Heart left ventricle (tissue), 16 donors: ENCODE measurements at regions of chr18 and their contacts with region 1.

Region 1: DNA sequence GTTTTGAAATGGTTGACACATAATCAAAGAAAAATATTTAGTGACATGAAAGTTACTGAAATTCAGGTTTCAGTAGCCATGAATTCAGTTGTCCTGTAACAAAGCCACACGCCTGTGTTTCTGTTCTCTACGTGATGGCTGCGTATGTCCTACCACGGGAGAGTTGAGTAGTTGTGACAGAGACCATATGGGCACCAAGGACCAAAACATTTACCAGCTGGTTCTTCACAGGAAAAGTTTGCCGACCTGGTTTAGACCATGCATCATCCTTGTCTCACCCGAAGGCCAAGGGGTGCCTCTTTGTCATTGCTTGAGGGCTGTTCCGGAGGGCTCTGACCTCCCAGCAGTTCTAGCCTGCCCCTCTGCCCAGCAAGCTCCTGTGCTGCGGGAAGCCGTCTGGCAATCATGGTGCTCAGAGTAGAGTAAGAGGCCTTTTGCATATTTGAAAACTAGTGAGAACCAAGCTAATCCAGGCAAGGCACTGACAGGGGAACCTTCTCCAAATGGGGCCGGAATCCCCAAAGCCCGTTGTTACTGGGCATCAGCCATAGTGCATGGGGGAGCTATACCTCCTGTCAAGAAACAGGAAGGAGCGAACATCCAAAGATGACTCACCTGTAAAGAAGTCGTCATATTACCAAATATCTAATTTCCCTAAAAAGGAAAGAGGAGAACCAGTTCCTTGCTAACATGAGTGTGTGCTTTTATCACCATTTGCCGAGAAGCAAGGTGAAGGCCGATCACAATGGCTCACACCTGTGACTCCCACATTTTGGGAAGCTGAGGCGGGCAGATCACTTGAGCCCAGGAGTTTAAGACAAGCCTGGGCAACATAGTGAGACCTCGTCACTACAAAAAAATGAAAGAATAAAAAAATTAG is 92.6 kb upstream of the RAB12 start:
- DNase-seq: no peak
- ATAC-seq: no peak
- H3K4me3 ChIP-seq: no peak overlapping the region
- H3K27ac ChIP-seq: no peak overlapping the region
- H3K4me1 ChIP-seq: no peaks in the 10 kb centered on the region
- H3K27me3 ChIP-seq: no peaks in the 10 kb centered on the region
- CTCF ChIP-seq: no peak
- POLR2A ChIP-seq: no peak

Region 2: DNA sequence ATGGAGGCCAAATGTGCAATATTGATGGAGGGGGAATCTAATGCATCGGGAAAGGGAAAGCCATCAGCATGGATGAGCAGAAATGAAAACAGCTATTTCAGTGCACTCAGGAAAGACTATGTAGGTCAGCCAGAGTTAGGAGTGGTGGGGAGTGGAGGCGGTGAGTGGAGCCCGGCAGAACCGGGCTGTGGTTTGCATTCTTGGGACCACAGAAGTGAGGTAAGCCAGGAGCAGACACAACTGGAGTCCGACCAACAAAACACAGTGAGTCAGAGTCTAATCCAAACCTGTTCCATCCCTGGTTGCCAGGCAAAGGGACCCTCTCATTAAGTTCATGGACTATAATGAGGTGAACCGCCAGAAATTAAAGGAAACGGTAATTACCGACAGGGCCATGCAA is 31.6 kb after region 1 on chr18:
- intact Hi-C with region 1: no loop called
- DNase-seq: no peak
- ATAC-seq: no peak
- H3K4me3 ChIP-seq: no peak overlapping the region
- H3K27ac ChIP-seq: no peak overlapping the region
- H3K4me1 ChIP-seq: no peaks in the 10 kb centered on the region
- H3K27me3 ChIP-seq: no peaks in the 10 kb centered on the region
- CTCF ChIP-seq: no peak
- POLR2A ChIP-seq: no peak

Region 3: GRCh38 chr18:8584798-8585197 is 68.2 kb after region 1 on chr18:
- intact Hi-C with region 1: loop called in 1 of 10 experiments (anchors 10 kb)
- DNase-seq: no peak
- ATAC-seq: no peak
- H3K4me3 ChIP-seq: no peak overlapping the region
- H3K27ac ChIP-seq: no peak overlapping the region
- H3K4me1 ChIP-seq: no peaks in the 10 kb centered on the region
- H3K27me3 ChIP-seq: peaks cover 0 to 12% (median 0%) of the 10 kb centered on the region in 9 donors
- CTCF ChIP-seq: no peak
- POLR2A ChIP-seq: no peak